Dendritic cell treated with granulocyte-macrophage colony-stimulating factor and Interleukin-4, amounts not matched to agents 40 ng/mL and 50 ng/mL, for 4 days (primary cell): ENCODE measurements at regions of chr18 and their contacts with region 1.

Region 1: GRCh38 chr18:32092422-32093101 is 888 bp downstream of the RNF138 start:
- H3K4me3 Mint-ChIP-seq: peak overlapping the region; percentile 98
- H3K27ac Mint-ChIP-seq: peak overlapping the region; percentile 97
- H3K4me1 Mint-ChIP-seq: peaks cover 46% of the 10 kb centered on the region
- H3K27me3 Mint-ChIP-seq: no peaks in the 10 kb centered on the region

Region 2: DNA sequence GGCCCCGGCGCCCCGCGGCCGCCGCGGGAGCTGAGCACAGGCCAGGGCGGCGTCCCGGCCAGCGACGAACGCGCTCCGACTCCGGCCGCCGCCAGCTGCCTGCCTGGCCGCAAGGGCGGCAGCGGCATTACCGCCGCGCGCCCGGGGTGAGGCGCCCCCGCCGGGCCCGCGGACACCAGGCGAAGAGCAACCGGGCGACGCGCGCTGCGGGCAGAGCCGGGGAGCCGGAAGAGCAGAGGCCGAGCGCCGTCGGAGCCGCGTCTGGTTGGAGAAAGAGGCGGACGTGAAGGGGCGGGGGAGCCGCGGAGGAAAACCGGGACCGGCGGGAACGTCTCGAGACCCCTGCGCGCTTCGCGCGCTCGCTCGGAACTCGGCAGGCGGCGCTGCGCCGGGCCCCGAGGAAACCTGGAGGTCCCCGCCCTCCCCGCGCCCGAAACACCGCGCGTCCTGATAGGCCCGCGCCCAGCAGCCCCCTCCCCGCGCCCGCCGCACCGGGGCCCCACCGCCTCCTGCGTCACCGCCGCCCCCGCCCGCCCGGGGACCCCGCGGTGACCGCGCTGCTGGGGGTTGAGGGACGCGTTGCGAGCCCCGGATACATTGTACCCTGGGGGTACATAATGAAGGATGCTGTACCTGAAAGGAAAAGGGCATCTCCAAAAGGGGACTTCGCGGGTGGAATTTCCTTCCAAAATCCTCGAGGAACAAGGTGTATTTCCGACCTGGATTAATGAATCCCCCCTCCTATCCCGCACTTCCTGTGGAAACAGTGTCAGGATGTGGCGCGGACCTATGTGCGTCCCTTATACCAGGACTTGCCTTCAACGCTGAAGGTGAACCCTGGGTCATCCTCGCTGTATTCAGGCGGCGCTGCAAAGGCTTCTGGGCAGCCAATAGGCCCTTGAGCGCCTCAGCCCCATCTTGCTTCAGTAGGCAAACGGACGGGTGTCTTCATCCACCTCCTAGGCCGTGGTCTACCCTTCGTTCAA is 407.2 kb before region 1 on chr18:
- intact Hi-C with region 1: loop called (anchors 10 kb)
- H3K4me3 Mint-ChIP-seq: peak overlapping the region; percentile 79
- H3K27ac Mint-ChIP-seq: peak overlapping the region; percentile 68
- H3K4me1 Mint-ChIP-seq: peaks cover 13% of the 10 kb centered on the region
- H3K27me3 Mint-ChIP-seq: peaks cover 17% of the 10 kb centered on the region

Region 3: DNA sequence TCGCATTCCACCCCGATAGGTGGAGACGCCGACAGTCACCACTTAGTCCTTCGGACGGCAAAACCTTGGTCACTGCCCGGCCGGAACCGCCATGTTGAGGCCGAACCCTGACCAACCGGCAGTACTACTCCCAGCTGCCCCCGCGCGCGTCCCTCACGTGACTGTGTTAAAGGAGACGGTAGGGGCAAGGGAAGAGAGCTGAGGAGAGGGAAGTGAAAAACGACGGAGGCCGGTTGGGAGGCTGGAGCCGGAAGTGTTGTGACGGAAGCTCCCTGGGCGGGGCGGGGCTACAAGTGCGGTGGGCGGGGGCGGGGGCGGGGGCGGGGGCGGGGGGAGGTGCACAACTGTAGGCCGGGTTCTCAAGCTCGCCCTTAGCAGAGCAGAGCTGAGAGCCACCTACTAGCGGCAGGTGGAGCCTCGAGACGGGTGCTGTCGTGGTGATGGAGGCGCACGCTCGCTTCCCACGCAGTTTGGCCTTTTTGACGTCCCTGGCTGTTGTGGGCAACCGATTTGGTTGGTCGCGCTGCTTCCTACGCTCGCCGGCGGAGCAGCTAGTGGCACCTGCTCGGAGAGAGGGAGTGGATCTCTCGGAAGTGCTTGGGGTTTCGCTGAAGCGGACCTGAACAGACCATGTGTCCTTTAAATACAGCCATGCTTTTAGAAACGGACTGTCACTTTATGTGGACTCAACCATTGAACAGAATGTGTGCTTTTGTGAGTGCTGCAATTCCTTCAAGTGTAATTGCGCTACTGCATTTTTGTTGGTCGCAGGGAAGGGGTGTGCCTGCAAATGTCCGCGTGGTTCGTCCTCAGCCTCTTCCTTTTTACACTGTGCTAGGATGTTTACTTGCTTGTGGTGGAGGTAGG is 149.3 kb before region 1 on chr18 and contains the start of gene TRAPPC8:
- intact Hi-C with region 1: loop called (anchors 1 kb)
- H3K4me3 Mint-ChIP-seq: peak within 1 kb of the TSS; percentile 97
- H3K27ac Mint-ChIP-seq: peak within 1 kb of the TSS; percentile 97
- H3K4me1 Mint-ChIP-seq: peaks cover 30% of the 10 kb centered on the region
- H3K27me3 Mint-ChIP-seq: no peaks in the 10 kb centered on the region

Region 4: DNA sequence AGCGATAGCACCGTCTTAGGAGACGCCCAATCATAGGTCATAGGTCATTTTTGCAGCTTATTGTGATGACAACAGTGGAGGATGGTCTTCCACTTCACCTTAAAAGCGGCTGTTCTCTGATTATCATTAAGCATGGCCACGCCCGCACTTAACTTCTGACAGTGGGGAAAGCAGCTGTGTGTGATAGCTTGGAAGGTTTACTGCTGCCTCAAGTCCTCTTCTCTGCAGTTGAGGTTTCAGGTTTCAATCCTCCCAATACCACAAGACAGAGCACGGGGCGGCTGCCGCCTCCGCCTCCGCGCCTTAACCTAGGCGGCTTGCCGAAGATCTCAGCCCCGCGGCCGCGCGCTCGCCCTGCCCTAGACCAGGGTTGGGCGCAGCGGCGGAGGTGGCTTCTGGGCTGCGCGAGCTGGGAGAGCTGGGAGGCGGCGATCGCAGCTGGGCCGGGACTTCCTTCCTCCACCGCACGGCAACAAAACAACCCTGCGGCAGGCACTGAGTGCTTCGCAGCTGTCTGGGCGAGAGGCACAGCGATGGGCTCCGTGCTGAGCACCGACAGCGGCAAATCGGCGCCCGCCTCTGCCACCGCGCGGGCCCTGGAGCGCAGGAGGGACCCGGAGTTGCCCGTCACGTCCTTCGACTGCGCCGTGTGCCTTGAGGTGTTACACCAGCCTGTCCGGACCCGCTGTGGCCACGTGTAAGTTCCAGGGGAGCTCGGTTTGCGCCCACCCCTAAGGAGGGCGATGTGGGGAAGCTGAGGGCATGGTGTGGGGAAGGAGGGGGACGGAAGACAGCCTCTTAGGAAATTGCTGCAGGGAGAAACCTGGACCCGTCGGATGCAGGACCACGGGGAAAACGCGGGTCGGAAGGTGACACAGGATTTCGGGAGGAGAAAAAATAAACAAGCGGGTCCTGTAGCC is 74.0 kb before region 1 on chr18 and contains the start of gene RNF125:
- intact Hi-C with region 1: loop called (anchors 5 kb)
- H3K4me3 Mint-ChIP-seq: peak within 1 kb of the TSS; percentile 96
- H3K27ac Mint-ChIP-seq: peak within 1 kb of the TSS; percentile 97
- H3K4me1 Mint-ChIP-seq: peaks cover 33% of the 10 kb centered on the region
- H3K27me3 Mint-ChIP-seq: no peaks in the 10 kb centered on the region

Region 5: DNA sequence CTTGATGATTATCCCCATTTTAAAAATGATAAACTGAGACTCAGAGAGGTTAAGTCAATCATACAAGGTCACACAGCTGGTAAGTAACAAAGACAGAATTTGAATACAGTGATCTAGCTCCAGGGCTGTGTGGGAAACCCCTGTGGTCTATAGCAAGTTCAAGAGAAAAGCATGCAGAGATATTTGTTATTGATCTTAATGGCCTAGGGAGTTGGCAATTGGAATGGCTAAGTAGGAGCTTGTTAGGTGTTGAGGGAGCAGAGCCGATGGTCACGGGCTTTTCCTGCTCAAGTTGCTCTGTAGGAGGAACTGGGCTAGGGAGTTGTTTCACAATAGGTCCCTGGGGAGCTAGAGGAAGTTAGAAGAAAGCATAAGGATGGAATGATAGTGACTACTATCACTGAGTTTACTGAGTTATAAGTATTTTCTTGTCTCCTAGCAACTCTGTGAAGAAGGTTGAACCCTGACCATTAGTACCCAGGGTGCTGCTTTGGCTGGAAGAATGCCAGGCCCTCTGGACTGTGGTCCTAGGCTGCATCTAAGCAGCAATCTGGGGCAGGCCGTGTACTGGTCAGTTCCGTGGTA is 44.0 kb before region 1 on chr18:
- intact Hi-C with region 1: loop called (anchors 2 kb)
- H3K4me3 Mint-ChIP-seq: no peak overlapping the region
- H3K27ac Mint-ChIP-seq: peak overlapping the region; percentile 90
- H3K4me1 Mint-ChIP-seq: peaks cover 33% of the 10 kb centered on the region
- H3K27me3 Mint-ChIP-seq: no peaks in the 10 kb centered on the region